Right cardiac atrium (tissue), 5 donors: ENCODE measurements at regions of chr2 and their contacts with region 1.

Region 1: GRCh38 chr2:126527836-126528507 is 128.0 kb upstream of the GYPC start:
- DNase-seq: peak; percentile 65 to 84 (median 71)
- ATAC-seq: peak; percentile 69 to 81
- H3K4me3 ChIP-seq: no peak overlapping the region
- H3K27ac ChIP-seq: no peak overlapping the region
- H3K4me1 ChIP-seq: no peaks in the 10 kb centered on the region
- H3K27me3 ChIP-seq: no peaks in the 10 kb centered on the region

Region 2: DNA sequence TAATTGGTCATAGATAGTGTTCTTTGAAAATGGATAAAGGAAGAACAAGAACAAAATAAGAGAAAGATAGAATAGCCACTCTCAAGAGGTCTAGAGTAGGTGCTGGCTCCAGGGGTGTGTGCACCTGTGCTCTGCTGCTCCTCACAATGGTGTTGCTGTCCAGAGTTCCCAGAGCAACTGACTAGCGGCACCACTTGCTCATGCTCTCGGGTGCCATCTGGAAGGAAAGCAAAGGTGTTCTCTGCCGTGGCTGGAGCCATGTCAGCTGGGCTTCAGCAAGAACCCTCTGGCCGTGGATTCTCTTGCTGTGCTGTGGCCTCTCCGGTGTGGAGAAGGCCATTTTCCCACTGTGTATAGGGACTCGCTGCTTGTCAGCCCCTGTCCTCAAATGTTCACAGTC is 256.1 kb after region 1 on chr2:
- intact Hi-C with region 1: loop called in 1 of 4 experiments (anchors 5 kb)
- DNase-seq: no peak
- ATAC-seq: no peak
- H3K4me3 ChIP-seq: no peak overlapping the region
- H3K27ac ChIP-seq: no peak overlapping the region
- H3K4me1 ChIP-seq: no peaks in the 10 kb centered on the region
- H3K27me3 ChIP-seq: no peaks in the 10 kb centered on the region

Region 3: GRCh38 chr2:127007652-127008051 is 479.7 kb after region 1 on chr2:
- intact Hi-C with region 1: no loop called
- DNase-seq: no peak
- ATAC-seq: no peak
- H3K4me3 ChIP-seq: no peak overlapping the region
- H3K27ac ChIP-seq: no peak overlapping the region
- H3K4me1 ChIP-seq: no peaks in the 10 kb centered on the region
- H3K27me3 ChIP-seq: peaks cover 4% of the 10 kb centered on the region